Lower leg skin (tissue), 4 donors: ENCODE measurements at regions of chr5 and their contacts with region 1.

Region 1: GRCh38 chr5:110790673-110791072 is 51.9 kb downstream of the SLC25A46 start:
- DNase-seq: no peak
- H3K4me3 ChIP-seq: no peak overlapping the region
- CTCF ChIP-seq: no peak
- POLR2A ChIP-seq: no peak

Region 2: DNA sequence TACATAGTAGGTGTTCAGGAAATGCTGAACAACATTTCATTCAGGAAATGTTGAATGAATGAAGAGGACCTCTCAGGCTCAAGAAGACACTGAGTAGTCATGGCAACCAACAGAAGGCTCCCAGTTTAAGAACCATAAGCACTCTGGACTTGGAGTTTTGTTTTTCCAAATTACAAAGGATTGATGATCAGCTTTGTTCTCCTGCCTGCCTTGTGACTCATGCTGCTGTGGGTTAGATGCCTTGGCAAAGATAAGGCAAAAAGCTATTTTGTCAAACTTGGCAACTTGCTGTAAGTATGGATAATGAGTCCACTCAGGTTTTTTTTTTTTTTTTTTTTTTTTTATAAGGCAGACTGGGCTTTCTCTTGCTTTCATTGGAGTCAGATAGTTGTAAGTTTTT is 429.2 kb before region 1 on chr5:
- intact Hi-C with region 1: no loop called
- DNase-seq: no peak
- H3K4me3 ChIP-seq: no peak overlapping the region
- CTCF ChIP-seq: no peak
- POLR2A ChIP-seq: no peak

Region 3: GRCh38 chr5:110840347-110840960 is 49.8 kb after region 1 on chr5:
- intact Hi-C with region 1: loop called (anchors 10 kb)
- DNase-seq: peak; percentile 26 to 80
- H3K4me3 ChIP-seq: no peak overlapping the region
- CTCF ChIP-seq: no peak
- POLR2A ChIP-seq: no peak

Region 4: GRCh38 chr5:111063700-111064322 is 273.1 kb after region 1 on chr5:
- intact Hi-C with region 1: no loop called
- DNase-seq: no peak
- H3K4me3 ChIP-seq: no peak overlapping the region
- CTCF ChIP-seq: no peak
- POLR2A ChIP-seq: no peak

Region 5: DNA sequence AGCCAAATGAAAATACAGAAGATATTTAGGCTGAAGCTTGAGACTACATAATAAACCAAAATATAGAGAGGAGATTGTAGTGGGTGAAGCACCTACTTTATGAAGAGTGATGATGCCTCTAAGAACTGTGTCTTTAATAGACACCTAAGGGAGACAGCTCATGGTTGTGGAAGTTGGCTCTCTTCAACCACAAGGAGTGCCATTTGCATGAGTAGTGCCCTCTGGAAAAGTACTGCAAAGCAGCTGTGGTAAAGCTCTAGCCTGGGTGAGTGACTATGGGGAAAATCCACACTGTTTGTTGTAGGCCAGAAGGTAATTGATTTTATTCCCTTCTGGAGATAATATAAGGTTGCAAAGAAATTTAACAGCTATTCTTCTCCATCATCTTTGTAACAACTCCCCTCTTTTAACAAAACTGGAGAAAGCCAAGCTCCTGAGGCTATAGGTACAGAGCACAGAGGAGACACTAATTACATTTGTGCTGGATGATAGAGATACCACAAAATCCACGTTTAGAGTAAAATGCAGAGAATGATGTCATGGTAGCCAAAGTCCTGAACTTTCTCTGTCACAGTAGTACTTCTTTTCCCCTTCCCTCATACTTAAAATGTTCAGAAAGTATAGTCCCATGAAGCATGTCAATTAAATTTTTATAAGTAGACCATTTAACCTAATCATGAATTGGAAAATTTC is 598.9 kb after region 1 on chr5:
- intact Hi-C with region 1: no loop called
- DNase-seq: no peak
- H3K4me3 ChIP-seq: no peak overlapping the region
- CTCF ChIP-seq: no peak
- POLR2A ChIP-seq: no peak